GM13976 (cell line): ENCODE measurements at regions of chr19 and their contacts with region 1.

Region 1: DNA sequence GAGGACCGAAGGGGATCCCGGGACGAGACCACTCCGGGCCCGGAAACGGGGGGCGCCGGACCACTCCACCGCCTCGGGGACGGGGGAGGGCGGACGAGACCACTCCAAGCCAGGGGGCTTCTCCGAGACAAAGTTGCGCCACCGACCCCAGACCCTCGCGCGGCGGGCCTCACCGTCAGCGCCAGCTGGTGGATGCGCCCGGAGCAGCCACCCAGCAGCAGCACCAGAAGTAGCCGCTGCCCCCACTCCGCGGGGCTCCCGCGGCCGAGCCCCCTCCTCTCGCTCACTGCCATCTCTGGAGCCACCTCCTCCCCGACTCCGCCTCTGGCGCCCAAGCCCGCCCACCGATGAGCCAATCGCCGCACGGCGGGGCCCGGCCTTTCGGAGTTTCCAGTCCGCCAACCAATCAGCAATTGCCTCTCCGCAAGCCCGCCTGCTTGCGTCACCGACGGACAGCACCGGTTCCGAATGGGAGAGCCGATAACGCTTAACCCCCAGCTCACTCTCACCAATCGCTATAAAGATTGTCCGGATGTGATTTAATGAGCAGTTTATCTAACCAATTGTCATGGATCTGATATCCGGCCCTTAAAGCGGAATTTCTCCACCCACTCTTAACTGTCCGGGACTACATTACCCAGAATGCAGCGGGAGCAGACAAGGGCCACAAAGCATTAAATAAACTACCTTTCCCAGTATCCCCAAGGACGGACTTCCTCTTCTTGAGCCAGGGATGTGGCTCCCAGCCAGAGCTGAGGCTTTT is at the start of gene GPR108:
- DNase-seq: peak; percentile 97
- CTCF ChIP-seq: no peak

Region 2: GRCh38 chr19:6521718-6522646 is 215.5 kb before region 1 on chr19:
- in situ Hi-C with region 1: loop called (anchors 5 kb)
- DNase-seq: peak; percentile 79
- CTCF ChIP-seq: no peak

Region 3: GRCh38 chr19:6590827-6591319 is 146.6 kb before region 1 on chr19 and contains the start of gene CD70:
- in situ Hi-C with region 1: no loop called
- DNase-seq: peak; percentile 88
- CTCF ChIP-seq: no peak

Region 4: GRCh38 chr19:6694147-6694815 is 43.2 kb before region 1 on chr19:
- in situ Hi-C with region 1: no loop called
- DNase-seq: no peak
- CTCF ChIP-seq: no peak